ENCODE measurements at regions of chr6 and their contacts with region 1.

Region 1: DNA sequence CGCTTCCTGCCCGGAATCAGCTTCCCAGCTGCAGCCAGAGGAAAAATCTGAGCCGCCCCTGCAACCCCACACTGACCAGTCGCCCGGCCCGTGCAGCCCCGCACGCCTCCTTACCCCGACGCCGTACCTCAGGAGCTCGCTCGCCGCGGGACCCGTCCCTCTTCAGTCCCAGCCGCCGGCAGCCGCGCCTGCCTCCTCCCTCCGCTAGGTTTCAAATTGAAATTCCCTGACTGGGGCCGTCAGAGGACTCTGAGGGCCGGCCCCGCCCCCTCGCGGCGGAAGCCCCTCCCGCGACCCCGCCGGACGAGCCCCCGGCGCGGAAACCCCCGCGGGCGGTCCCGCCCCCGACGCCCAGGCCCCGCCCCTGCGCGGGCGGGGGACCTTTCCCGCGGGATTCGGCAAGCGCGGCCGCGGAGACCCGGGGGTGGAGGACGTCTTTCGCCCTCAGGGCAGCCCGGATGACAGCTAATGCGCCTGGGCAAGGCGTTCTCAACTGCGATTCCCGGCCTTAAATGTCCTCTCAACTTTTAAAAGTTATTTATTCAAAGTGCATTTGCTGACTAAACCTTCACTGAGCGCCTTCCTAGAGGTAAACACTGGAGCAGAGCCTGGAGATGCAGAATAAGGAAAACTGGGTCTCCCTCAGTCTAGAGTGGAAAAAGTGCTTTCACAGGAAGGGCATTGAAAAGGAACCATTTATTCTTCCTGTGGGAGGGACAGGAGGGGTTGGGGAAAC is at the start of gene EPB41L2:
- DNase-seq: peak; percentile 90
- H3K4me3 ChIP-seq: peak within 1 kb of the TSS; percentile 96
- H3K27ac ChIP-seq: peak within 1 kb of the TSS; percentile 91
- H3K4me1 ChIP-seq: peaks cover 34% of the 10 kb centered on the region
- H3K27me3 ChIP-seq: no peaks in the 10 kb centered on the region
- CTCF ChIP-seq: peak; percentile 66
- total RNA-seq, gene EPB41L2: 70.8 TPM

Region 2: GRCh38 chr6:130933712-130934200 is 129.4 kb before region 1 on chr6:
- intact Hi-C with region 1: no loop called
- DNase-seq: no peak
- H3K4me3 ChIP-seq: no peak overlapping the region
- H3K27ac ChIP-seq: peak overlapping the region; percentile 31
- H3K4me1 ChIP-seq: peaks cover 54% of the 10 kb centered on the region
- H3K27me3 ChIP-seq: no peaks in the 10 kb centered on the region
- CTCF ChIP-seq: no peak

Region 3: DNA sequence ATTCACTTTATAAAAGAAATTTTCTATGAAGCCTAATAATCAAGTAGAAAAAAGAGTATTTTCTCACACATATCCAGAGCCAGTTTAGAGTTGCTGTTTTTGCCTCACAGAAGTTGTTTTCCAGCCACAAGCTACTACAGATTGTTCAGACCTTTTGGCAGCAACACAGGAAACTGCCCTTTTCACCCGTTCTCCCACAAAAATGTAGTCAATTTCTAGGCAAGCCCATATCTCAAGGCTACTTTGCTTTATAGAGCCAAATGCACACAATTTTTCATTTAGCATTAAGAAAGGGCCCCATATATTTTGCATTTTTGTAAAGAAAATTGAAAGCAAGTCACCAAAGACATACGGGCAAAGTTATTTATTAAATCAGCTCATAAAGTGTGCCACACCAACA is 49.7 kb before region 1 on chr6:
- intact Hi-C with region 1: loop called (anchors 10 kb)
- DNase-seq: no peak
- H3K4me3 ChIP-seq: peak overlapping the region; percentile 34
- H3K27ac ChIP-seq: peak overlapping the region; percentile 59
- H3K4me1 ChIP-seq: peaks cover 45% of the 10 kb centered on the region
- H3K27me3 ChIP-seq: no peaks in the 10 kb centered on the region
- CTCF ChIP-seq: no peak

Region 4: GRCh38 chr6:131183427-131184095 is 120.4 kb after region 1 on chr6:
- intact Hi-C with region 1: no loop called
- DNase-seq: no peak
- H3K4me3 ChIP-seq: no peak overlapping the region
- H3K27ac ChIP-seq: no peak overlapping the region
- H3K4me1 ChIP-seq: no peaks in the 10 kb centered on the region
- H3K27me3 ChIP-seq: no peaks in the 10 kb centered on the region
- CTCF ChIP-seq: no peak

Measured in left ventricle myocardium inferior (tissue), 1 donor.